ENCODE measurements at regions of chr1 and their contacts with region 1.

Region 1: GRCh38 chr1:176374967-176375569 is 87.9 kb upstream of the PAPPA2 start:
- DNase-seq: peak; percentile 75
- H3K4me3 ChIP-seq: no peak overlapping the region
- H3K27ac ChIP-seq: no peak overlapping the region
- H3K4me1 ChIP-seq: no peaks in the 10 kb centered on the region
- H3K27me3 ChIP-seq: no peaks in the 10 kb centered on the region
- CTCF ChIP-seq: peak; percentile 55 to 82 (median 74)
- EP300 ChIP-seq: no peak
- POLR2A ChIP-seq: no peak

Region 2: DNA sequence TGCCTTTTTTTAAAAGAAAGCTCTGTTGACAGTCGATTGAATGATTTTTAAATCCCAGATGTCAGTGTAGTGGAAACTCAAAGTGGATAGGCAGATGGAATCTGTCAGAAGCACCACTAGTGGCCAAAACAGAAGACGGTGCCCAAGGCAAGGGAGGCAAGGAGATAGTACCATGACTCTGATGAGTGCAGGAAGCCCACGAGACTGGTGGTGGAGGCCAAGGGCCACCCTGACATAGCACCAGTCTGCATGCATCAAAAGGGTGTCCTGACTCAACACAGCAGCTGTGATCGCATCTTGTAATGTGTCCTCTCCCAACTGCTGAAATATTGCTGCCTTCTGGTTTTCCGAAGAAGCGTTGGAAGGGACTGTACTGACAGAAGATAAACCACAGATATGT is 36.2 kb before region 1 on chr1:
- in situ Hi-C with region 1: no loop called
- intact Hi-C with region 1: no loop called
- DNase-seq: no peak
- H3K4me3 ChIP-seq: no peak overlapping the region
- H3K27ac ChIP-seq: no peak overlapping the region
- H3K4me1 ChIP-seq: no peaks in the 10 kb centered on the region
- H3K27me3 ChIP-seq: no peaks in the 10 kb centered on the region
- CTCF ChIP-seq: no peak
- EP300 ChIP-seq: no peak
- POLR2A ChIP-seq: no peak

Region 3: GRCh38 chr1:176469450-176470010 is 94.5 kb after region 1 on chr1:
- in situ Hi-C with region 1: no loop called
- intact Hi-C with region 1: no loop called
- DNase-seq: no peak
- H3K4me3 ChIP-seq: no peak overlapping the region
- H3K27ac ChIP-seq: peak overlapping the region in 1 of 4 donors; percentile 11
- H3K4me1 ChIP-seq: no peaks in the 10 kb centered on the region
- H3K27me3 ChIP-seq: no peaks in the 10 kb centered on the region
- CTCF ChIP-seq: no peak
- EP300 ChIP-seq: no peak
- POLR2A ChIP-seq: no peak

Region 4: GRCh38 chr1:176479971-176480370 is 104.9 kb after region 1 on chr1:
- in situ Hi-C with region 1: no loop called
- intact Hi-C with region 1: no loop called
- DNase-seq: no peak
- H3K4me3 ChIP-seq: no peak overlapping the region
- H3K27ac ChIP-seq: no peak overlapping the region
- H3K4me1 ChIP-seq: no peaks in the 10 kb centered on the region
- H3K27me3 ChIP-seq: no peaks in the 10 kb centered on the region
- CTCF ChIP-seq: no peak
- EP300 ChIP-seq: no peak
- POLR2A ChIP-seq: no peak

Region 5: DNA sequence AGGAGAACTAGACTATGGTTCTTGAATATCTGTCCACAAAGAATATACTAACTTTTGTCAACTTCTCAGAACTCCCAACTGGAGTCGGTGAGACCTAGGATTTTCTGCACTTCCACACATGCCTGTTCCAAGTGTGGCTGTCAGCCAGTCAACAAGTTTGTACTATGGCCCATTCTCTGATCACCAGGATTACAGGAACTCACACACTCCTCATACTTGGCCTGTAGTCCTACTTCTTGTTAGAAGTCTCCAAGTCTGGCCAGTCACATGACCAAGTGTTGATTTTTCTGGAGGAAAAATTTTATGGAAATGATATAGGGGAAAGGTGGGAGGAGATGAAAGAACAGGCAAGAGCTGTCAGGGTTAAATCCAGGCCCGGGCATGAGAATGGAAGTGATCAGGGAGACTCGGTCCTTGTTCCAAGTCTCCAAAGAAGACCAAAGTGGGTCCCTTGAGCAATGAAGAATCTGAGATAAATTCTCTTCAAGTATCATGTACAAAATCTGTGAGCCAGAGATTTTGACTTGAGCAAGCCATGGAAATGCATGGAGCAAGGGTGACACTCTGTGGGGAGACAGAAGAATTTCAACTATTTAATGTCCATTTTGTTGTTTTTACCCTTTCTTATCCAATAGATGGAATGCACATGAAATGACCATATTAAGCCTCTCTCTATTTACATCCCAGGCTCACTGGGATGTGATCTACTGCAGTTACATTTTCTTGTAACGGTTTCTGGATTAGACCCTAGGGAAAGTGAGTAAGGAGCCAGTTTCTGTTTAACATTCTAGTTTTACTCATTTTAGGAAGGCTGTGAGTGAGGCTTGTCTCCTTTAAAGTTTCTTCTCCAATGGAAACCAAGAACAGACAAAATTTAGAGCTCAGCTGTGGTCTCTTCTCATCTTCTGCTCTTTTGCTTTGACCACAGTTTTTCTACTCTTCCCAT is 468.6 kb after region 1 on chr1:
- in situ Hi-C with region 1: no loop called
- intact Hi-C with region 1: loop called (anchors 10 kb)
- DNase-seq: no peak
- H3K4me3 ChIP-seq: no peak overlapping the region
- H3K27ac ChIP-seq: no peak overlapping the region
- H3K4me1 ChIP-seq: no peaks in the 10 kb centered on the region
- H3K27me3 ChIP-seq: no peaks in the 10 kb centered on the region
- CTCF ChIP-seq: peak in 4 of 5 experiments; percentile 24 to 42 (median 32)
- EP300 ChIP-seq: no peak
- POLR2A ChIP-seq: no peak

Region 6: DNA sequence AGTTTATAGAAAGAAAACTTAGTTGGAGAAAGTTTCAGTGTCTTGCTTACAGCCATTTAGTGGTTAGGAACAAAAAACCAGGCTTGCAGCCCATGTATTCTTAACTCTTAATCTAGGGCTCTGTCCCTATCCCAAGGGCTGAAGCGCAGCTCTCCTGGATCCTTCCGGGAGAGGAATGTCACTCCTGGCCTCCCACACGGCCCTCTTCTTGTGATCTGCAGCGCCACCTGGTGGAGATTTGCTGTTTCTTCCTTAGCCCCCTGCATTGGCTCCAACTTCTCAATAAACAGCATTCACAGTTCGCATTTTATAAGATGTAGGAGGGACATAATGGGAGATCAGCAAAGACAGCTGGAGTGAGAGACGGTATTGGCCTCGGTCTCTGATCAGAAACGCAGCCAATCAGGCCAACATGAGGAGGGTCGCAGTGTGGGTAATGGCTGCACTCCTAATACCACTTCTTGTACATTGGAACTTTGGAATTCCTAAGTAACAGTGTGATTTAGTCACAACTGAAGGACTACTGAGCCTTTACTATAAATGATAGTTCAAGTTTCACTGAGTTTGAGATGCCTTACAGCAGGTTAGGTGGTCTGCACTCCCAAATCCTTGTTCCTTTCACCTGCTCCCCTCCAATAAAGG is 506.0 kb after region 1 on chr1:
- in situ Hi-C with region 1: no loop called
- intact Hi-C with region 1: loop called (anchors 5 kb)
- DNase-seq: peak; percentile 66
- H3K4me3 ChIP-seq: no peak overlapping the region
- H3K27ac ChIP-seq: no peak overlapping the region
- H3K4me1 ChIP-seq: no peaks in the 10 kb centered on the region
- H3K27me3 ChIP-seq: no peaks in the 10 kb centered on the region
- CTCF ChIP-seq: peak; percentile 74 to 83 (median 77)
- EP300 ChIP-seq: no peak
- POLR2A ChIP-seq: no peak

Measured in transverse colon (tissue), 4 donors.